PC-9 (cell line): ENCODE measurements at regions of chr20 and their contacts with region 1.

Region 1: DNA sequence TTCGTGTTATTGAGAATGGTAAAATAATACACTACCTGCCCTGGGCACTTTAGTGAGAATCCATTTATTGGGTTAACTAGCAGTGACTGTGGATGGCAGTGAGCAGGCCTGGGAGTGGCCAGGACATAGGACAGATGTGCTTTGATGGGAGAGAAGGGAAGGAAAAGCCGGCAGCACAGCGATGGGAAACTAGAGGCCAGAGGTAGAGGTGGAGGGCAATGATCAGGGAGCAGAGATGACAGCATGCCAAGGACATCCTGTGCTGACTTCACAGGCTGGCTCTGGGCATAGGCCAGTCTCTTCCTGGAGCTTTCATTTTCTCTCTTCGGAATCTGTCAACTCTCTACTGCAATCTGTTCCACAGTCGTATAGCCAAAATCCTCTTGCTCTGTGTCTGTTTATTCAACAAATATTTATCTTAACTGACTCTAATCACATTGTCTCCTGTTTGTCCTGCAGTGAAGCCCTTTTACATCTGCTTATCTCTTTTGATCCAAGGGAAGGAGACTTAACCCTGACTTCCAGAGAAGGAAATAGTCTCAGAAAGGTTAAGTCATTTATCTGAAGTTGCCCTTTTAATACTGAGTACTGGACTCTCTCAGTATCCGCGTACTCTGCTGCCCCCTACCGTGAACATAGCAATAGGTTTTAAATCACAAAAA is 18.4 kb upstream of the MMP24 start:
- DNase-seq: peak; percentile 56 to 73
- H3K4me3 ChIP-seq: no peak overlapping the region
- H3K27ac ChIP-seq: no peak overlapping the region
- H3K4me1 ChIP-seq: no peaks in the 10 kb centered on the region
- H3K27me3 ChIP-seq: no peaks in the 10 kb centered on the region
- CTCF ChIP-seq: peak; percentile 85

Region 2: DNA sequence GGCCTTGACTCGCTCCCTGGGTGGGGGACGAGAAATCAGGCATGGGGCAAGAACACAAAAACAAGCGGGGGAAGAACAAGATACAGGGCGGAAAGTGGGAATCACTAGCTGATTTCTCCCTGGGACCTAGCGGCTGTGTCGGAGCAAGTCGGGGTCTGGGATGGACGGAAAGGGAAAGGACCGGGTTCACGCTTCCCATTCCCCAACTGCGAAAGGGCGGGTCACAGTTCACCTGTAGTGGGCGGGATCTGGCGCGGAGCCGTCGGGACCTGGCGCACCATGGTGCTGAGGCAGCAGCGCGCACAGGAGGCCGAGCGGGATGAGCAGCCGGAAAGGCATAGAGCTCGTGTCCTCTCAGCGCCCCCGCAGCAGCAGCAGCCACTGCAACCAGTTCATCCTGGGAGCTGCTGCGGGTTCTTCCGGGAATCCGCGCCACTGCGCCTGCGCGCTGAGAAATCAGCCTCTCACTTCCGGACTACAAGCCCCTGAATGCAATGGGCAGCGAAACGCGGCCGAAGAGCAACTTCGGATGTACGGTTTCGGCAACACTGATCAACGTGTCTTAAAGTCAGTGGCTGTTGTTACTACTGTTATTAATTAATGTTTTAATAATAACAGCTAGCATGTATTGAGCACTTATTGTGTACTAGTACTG is 61.0 kb before region 1 on chr20 and contains the start of gene EDEM2:
- CTCF ChIA-PET with region 1: interaction called, 7 read pairs
- POLR2A ChIA-PET with region 1: no interaction called
- intact Hi-C with region 1: loop called (anchors 1 kb)
- DNase-seq: peak; percentile 89 to 96
- H3K4me3 ChIP-seq: peak within 1 kb of the TSS; percentile 93
- H3K27ac ChIP-seq: peak within 1 kb of the TSS; percentile 94
- H3K4me1 ChIP-seq: peaks cover 14% of the 10 kb centered on the region
- H3K27me3 ChIP-seq: no peaks in the 10 kb centered on the region
- CTCF ChIP-seq: no peak
- total RNA-seq, gene EDEM2: 28.6 and 34.9 TPM in 2 replicates